ENCODE measurements at regions of chr5 and their contacts with region 1.

Region 1: GRCh38 chr5:126499853-126500342 is 76.7 kb downstream of the GRAMD2B start:
- DNase-seq: peak in 4 of 5 donors; percentile 60 to 64 (median 62)
- H3K4me3 ChIP-seq: no peak overlapping the region
- H3K4me3 Mint-ChIP-seq: no peak overlapping the region
- H3K27ac ChIP-seq: no peak overlapping the region
- H3K27ac Mint-ChIP-seq: peak overlapping the region in 6 of 7 donors; percentile 17 to 84 (median 50)
- H3K4me1 ChIP-seq: peaks cover 7% of the 10 kb centered on the region
- H3K4me1 Mint-ChIP-seq: peaks cover 14 to 22% (median 16%) of the 10 kb centered on the region in 4 donors
- H3K27me3 ChIP-seq: no peaks in the 10 kb centered on the region
- H3K27me3 Mint-ChIP-seq: no peaks in the 10 kb centered on the region

Region 2: GRCh38 chr5:126189862-126190261 is 310.0 kb before region 1 on chr5:
- CTCF ChIA-PET with region 1: no interaction called
- POLR2A ChIA-PET with region 1: no interaction called
- intact Hi-C with region 1: no loop called
- DNase-seq: no peak
- H3K4me3 ChIP-seq: no peak overlapping the region
- H3K4me3 Mint-ChIP-seq: no peak overlapping the region
- H3K27ac ChIP-seq: no peak overlapping the region
- H3K27ac Mint-ChIP-seq: no peak overlapping the region
- H3K4me1 ChIP-seq: no peaks in the 10 kb centered on the region
- H3K4me1 Mint-ChIP-seq: no peaks in the 10 kb centered on the region
- H3K27me3 ChIP-seq: no peaks in the 10 kb centered on the region
- H3K27me3 Mint-ChIP-seq: no peaks in the 10 kb centered on the region

Region 3: GRCh38 chr5:126348855-126349635 is 150.9 kb before region 1 on chr5:
- CTCF ChIA-PET with region 1: interaction called, 69 read pairs
- POLR2A ChIA-PET with region 1: interaction called, 3 read pairs
- intact Hi-C with region 1: loop called (anchors 1 kb)
- DNase-seq: no peak
- H3K4me3 ChIP-seq: no peak overlapping the region
- H3K4me3 Mint-ChIP-seq: no peak overlapping the region
- H3K27ac ChIP-seq: no peak overlapping the region
- H3K27ac Mint-ChIP-seq: peak overlapping the region in 1 of 7 donors; percentile 20
- H3K4me1 ChIP-seq: peaks cover 2% of the 10 kb centered on the region
- H3K4me1 Mint-ChIP-seq: peaks cover 1 to 2% (median 2%) of the 10 kb centered on the region in 4 donors
- H3K27me3 ChIP-seq: no peaks in the 10 kb centered on the region
- H3K27me3 Mint-ChIP-seq: peaks cover 25 to 30% of the 10 kb centered on the region in 2 donors

Region 4: GRCh38 chr5:126422989-126423788 is 76.7 kb before region 1 on chr5 and contains the start of gene GRAMD2B:
- CTCF ChIA-PET with region 1: interaction called, 21 read pairs
- POLR2A ChIA-PET with region 1: interaction called, 7 read pairs
- intact Hi-C with region 1: loop called (anchors 1 kb)
- DNase-seq: peak; percentile 70 to 82 (median 75)
- H3K4me3 ChIP-seq: peak within 1 kb of the TSS; percentile 70 to 79
- H3K4me3 Mint-ChIP-seq: peak within 1 kb of the TSS; percentile 90 to 95 (median 92)
- H3K27ac ChIP-seq: peak within 1 kb of the TSS; percentile 87
- H3K27ac Mint-ChIP-seq: peak within 1 kb of the TSS; percentile 87 to 95 (median 94)
- H3K4me1 ChIP-seq: peaks cover 22% of the 10 kb centered on the region
- H3K4me1 Mint-ChIP-seq: peaks cover 20 to 40% (median 27%) of the 10 kb centered on the region in 4 donors
- H3K27me3 ChIP-seq: no peaks in the 10 kb centered on the region
- H3K27me3 Mint-ChIP-seq: no peaks in the 10 kb centered on the region
- total RNA-seq, gene GRAMD2B: 4.8 to 6.1 TPM

Region 5: DNA sequence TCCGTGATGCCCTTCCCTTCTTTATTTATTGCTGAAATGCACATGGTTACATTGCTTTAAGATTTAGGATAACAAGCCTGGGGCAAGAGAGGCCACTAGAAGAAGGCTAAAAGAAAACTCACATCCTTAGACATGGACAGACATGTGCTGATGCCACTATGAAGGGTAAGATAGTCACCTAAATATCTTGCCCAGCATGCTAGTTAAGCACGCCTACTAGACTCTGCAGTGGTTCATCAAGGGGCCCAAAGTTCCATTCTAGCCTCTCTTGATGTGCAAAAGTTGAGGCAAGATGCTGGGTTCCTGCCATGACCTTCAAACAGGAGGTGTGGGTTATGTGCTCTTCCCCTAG is 27.4 kb before region 1 on chr5:
- CTCF ChIA-PET with region 1: interaction called, 13 read pairs
- POLR2A ChIA-PET with region 1: no interaction called
- intact Hi-C with region 1: no loop called
- DNase-seq: no peak
- H3K4me3 ChIP-seq: no peak overlapping the region
- H3K4me3 Mint-ChIP-seq: no peak overlapping the region
- H3K27ac ChIP-seq: no peak overlapping the region
- H3K27ac Mint-ChIP-seq: no peak overlapping the region
- H3K4me1 ChIP-seq: no peaks in the 10 kb centered on the region
- H3K4me1 Mint-ChIP-seq: no peaks in the 10 kb centered on the region
- H3K27me3 ChIP-seq: no peaks in the 10 kb centered on the region
- H3K27me3 Mint-ChIP-seq: no peaks in the 10 kb centered on the region

Region 6: GRCh38 chr5:126536874-126537273 is 37.0 kb after region 1 on chr5:
- CTCF ChIA-PET with region 1: interaction called, 34 read pairs
- POLR2A ChIA-PET with region 1: interaction called, 3 read pairs
- intact Hi-C with region 1: loop called (anchors 1 kb)
- DNase-seq: no peak
- H3K4me3 ChIP-seq: no peak overlapping the region
- H3K4me3 Mint-ChIP-seq: no peak overlapping the region
- H3K27ac ChIP-seq: no peak overlapping the region
- H3K27ac Mint-ChIP-seq: no peak overlapping the region
- H3K4me1 ChIP-seq: no peaks in the 10 kb centered on the region
- H3K4me1 Mint-ChIP-seq: peaks cover 0 to 1% (median 0%) of the 10 kb centered on the region in 4 donors
- H3K27me3 ChIP-seq: no peaks in the 10 kb centered on the region
- H3K27me3 Mint-ChIP-seq: peaks cover 1 to 2% of the 10 kb centered on the region in 2 donors

Region 7: GRCh38 chr5:126576974-126577373 is 77.1 kb after region 1 on chr5:
- CTCF ChIA-PET with region 1: no interaction called
- POLR2A ChIA-PET with region 1: no interaction called
- intact Hi-C with region 1: no loop called
- DNase-seq: no peak
- H3K4me3 ChIP-seq: no peak overlapping the region
- H3K4me3 Mint-ChIP-seq: no peak overlapping the region
- H3K27ac ChIP-seq: no peak overlapping the region
- H3K27ac Mint-ChIP-seq: no peak overlapping the region
- H3K4me1 ChIP-seq: no peaks in the 10 kb centered on the region
- H3K4me1 Mint-ChIP-seq: no peaks in the 10 kb centered on the region
- H3K27me3 ChIP-seq: no peaks in the 10 kb centered on the region
- H3K27me3 Mint-ChIP-seq: no peaks in the 10 kb centered on the region

Measured in CD4-positive, alpha-beta memory T cell (primary cell).